Activated B cell treated with CpG ODN at 0.5 μM for 24 hours (primary cell): ENCODE measurements at regions of chr2 and their contacts with region 1.

Region 1: DNA sequence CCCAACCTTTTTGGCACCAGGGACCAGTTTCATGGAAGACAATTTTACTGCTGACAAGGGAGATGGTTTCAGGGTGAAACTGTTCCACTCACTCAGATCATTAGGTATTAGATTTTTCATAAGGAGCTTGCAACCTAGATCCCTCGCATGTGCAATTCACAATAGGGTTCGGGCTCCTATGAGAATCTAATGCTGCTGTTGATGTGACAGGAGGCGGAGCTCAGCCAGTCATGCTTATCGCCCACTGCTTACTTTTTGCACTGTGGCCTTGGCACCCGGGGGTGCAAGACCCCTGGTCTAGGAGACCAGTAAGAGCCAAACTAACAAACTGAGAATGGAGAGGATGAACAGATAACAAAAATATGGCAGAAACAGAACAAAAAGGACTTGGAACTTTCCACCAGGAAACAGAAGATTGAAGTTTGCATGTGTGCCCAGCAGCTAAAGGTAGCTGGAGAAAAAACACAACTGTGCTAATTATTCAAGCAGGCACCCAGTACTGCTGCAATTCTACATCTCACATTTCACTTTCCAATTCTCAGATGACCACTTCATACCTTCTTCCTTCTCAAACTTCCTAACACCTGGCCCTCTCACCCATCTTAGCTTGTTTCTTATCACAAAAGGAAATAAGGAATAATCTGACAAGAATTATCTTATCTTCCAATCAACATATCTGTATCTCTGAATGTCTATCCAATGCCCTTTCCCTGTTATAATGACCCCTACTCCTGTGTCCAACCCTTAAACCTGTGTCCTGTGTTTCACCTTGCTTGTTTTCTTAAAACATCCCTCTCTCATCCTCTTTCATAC is 24.8 kb downstream of the SP3 start:
- DNase-seq: no peak
- ATAC-seq: peak; percentile 26
- H3K4me3 Mint-ChIP-seq: peak overlapping the region; percentile 35
- H3K27ac Mint-ChIP-seq: peak overlapping the region; percentile 71
- H3K4me1 Mint-ChIP-seq: peaks cover 70% of the 10 kb centered on the region
- H3K27me3 Mint-ChIP-seq: no peaks in the 10 kb centered on the region
- CTCF ChIP-seq: no peak

Region 2: DNA sequence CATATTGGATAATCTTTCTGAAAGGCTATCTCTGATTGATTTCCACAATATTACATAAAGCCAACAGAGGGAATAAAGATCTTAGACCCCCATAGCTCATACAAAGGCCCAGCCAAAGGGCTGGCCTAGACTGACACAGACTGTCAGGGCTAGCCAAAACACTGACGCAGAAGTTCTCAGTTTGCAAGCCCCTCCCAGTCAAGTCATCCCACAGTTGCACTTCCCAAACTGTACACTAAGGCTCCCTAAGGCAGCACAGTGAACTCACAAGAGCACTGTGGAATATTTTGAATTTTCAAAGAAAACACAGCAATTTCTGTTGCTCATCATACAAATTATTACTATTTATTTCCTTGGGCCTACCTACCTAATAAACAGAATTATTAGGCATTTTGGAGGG is 220.1 kb before region 1 on chr2:
- CTCF ChIA-PET with region 1: no interaction called
- POLR2A ChIA-PET with region 1: no interaction called
- intact Hi-C with region 1: no loop called
- DNase-seq: no peak
- ATAC-seq: no peak
- H3K4me3 Mint-ChIP-seq: no peak overlapping the region
- H3K27ac Mint-ChIP-seq: no peak overlapping the region
- H3K4me1 Mint-ChIP-seq: no peaks in the 10 kb centered on the region
- H3K27me3 Mint-ChIP-seq: peaks cover 49% of the 10 kb centered on the region
- CTCF ChIP-seq: no peak

Region 3: DNA sequence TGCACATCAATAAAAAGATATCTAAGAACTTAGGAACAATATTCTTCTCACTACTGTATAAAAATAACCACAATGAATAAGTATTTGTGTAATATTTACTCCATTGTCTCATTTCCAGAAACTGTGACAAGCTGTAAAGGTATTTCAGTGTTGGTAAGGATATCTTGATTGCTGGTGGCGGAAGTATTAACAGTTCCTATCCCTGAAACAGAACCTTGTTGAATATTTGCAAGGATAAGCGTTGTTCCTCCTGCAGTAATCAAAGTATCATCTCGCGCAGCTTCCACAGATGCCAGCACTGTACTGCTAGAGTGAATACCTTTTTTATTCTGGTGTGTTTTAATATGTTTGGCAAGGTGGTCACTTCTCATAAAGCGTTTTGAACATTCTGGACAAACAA is 30.6 kb before region 1 on chr2:
- CTCF ChIA-PET with region 1: no interaction called
- POLR2A ChIA-PET with region 1: no interaction called
- intact Hi-C with region 1: loop called (anchors 5 kb)
- DNase-seq: no peak
- ATAC-seq: no peak
- H3K4me3 Mint-ChIP-seq: no peak overlapping the region
- H3K27ac Mint-ChIP-seq: no peak overlapping the region
- H3K4me1 Mint-ChIP-seq: no peaks in the 10 kb centered on the region
- H3K27me3 Mint-ChIP-seq: no peaks in the 10 kb centered on the region
- CTCF ChIP-seq: no peak

Region 4: GRCh38 chr2:173924285-173924684 is 16.1 kb before region 1 on chr2:
- CTCF ChIA-PET with region 1: no interaction called
- POLR2A ChIA-PET with region 1: interaction called, 4 read pairs
- intact Hi-C with region 1: loop called (anchors 2 kb)
- DNase-seq: no peak
- ATAC-seq: no peak
- H3K4me3 Mint-ChIP-seq: no peak overlapping the region
- H3K27ac Mint-ChIP-seq: no peak overlapping the region
- H3K4me1 Mint-ChIP-seq: peaks cover 60% of the 10 kb centered on the region
- H3K27me3 Mint-ChIP-seq: no peaks in the 10 kb centered on the region
- CTCF ChIP-seq: no peak